ENCODE measurements at regions of chr2 and their contacts with region 1.

Region 1: GRCh38 chr2:70964596-70965386 is 13.6 kb upstream of the ANKRD53 start:
- DNase-seq: peak; percentile 71 to 92 (median 79)
- ATAC-seq: peak; percentile 99
- H3K4me3 ChIP-seq: peak overlapping the region; percentile 63
- H3K4me3 Mint-ChIP-seq: peak overlapping the region; percentile 87
- H3K27ac ChIP-seq: no peak overlapping the region
- H3K27ac Mint-ChIP-seq: no peak overlapping the region
- H3K4me1 ChIP-seq: peaks cover 11% of the 10 kb centered on the region
- H3K4me1 Mint-ChIP-seq: peaks cover 8% of the 10 kb centered on the region
- H3K27me3 ChIP-seq: peaks cover 17 to 19% of the 10 kb centered on the region in 2 experiments
- H3K27me3 Mint-ChIP-seq: peaks cover 41% of the 10 kb centered on the region
- CTCF ChIP-seq: peak; percentile 91

Region 2: GRCh38 chr2:70977605-70978205 is 12.9 kb after region 1 on chr2:
- CTCF ChIA-PET with region 1: interaction called, 16 read pairs
- POLR2A ChIA-PET with region 1: no interaction called
- intact Hi-C with region 1: no loop called
- DNase-seq: peak in 4 of 14 experiments; percentile 49 to 63 (median 55)
- ATAC-seq: peak; percentile 37
- H3K4me3 ChIP-seq: peak overlapping the region; percentile 76
- H3K4me3 Mint-ChIP-seq: peak overlapping the region; percentile 91
- H3K27ac ChIP-seq: peak overlapping the region in 1 of 2 donors; percentile 58
- H3K27ac Mint-ChIP-seq: peak overlapping the region; percentile 67
- H3K4me1 ChIP-seq: peaks cover 24% of the 10 kb centered on the region
- H3K4me1 Mint-ChIP-seq: peaks cover 20% of the 10 kb centered on the region
- H3K27me3 ChIP-seq: no peaks in the 10 kb centered on the region
- H3K27me3 Mint-ChIP-seq: no peaks in the 10 kb centered on the region
- CTCF ChIP-seq: peak; percentile 26

Region 3: DNA sequence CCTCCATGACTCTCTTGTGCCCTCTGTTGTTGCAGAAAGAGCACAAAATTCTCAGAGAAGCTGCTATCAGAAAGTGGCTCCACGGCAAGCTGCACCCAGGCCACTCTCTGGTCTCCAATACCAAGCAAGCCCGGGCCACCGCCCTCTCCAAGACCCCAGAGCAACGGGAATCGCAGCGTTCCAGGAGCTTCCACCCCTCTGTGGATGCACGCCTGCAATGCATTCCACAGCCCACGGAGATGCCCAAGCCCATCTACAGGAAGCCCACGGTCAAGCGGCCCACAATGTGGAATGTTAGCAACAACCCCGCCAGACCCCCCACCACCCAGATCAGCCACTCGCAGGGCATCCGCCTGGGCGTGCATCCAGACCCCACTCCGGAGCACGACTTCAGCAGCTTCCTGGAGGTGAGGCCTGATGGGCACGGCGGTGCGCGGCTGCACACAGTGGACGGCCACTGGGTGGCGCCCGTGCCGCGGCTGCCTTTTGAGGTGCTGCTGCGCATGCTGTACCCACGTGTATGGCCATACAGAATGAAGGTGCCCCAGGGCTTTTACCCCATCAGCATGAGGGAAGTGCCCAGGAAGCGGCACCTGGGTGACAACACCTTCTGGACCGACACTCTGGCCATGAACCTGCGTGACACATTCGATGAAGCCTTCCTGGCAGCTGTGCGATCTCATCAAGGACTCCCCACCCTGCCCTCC is 19.9 kb after region 1 on chr2:
- CTCF ChIA-PET with region 1: interaction called, 12 read pairs
- POLR2A ChIA-PET with region 1: no interaction called
- intact Hi-C with region 1: no loop called
- DNase-seq: peak; percentile 71 to 90 (median 80)
- ATAC-seq: peak; percentile 100
- H3K4me3 ChIP-seq: no peak overlapping the region
- H3K4me3 Mint-ChIP-seq: peak overlapping the region; percentile 23
- H3K27ac ChIP-seq: no peak overlapping the region
- H3K27ac Mint-ChIP-seq: peak overlapping the region; percentile 27
- H3K4me1 ChIP-seq: peaks cover 12% of the 10 kb centered on the region
- H3K4me1 Mint-ChIP-seq: peaks cover 22% of the 10 kb centered on the region
- H3K27me3 ChIP-seq: no peaks in the 10 kb centered on the region
- H3K27me3 Mint-ChIP-seq: no peaks in the 10 kb centered on the region
- CTCF ChIP-seq: peak; percentile 90

Measured in CD4-positive, alpha-beta T cell (primary cell).